ENCODE measurements at regions of chrX and their contacts with region 1.

Region 1: DNA sequence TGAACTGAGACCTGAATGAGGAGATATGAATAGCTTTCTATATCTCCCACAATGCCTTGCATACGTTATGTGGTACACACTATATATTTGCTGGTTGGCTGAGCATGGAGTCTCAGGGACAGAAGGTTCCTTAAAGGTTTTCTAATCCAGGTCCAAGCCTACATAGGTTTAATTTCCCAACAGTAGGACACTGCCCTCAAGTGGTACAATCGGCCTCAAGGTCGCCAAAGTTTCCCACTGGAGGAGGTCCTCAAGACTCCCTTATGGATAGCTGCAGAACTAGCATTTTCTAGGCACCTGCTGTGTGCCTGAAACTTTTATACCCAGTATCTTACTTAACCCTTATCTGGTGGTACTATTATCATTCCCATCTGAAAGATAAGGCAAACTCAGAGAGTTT is 21.0 kb upstream of the EFNB1 start:
- DNase-seq: no peak

Region 2: GRCh38 chrX:68511255-68511654 is 296.6 kb before region 1 on chrX:
- intact Hi-C with region 1: loop called in 1 of 2 experiments (anchors 10 kb)
- DNase-seq: no peak

Region 3: GRCh38 chrX:68732906-68733493 is 74.8 kb before region 1 on chrX:
- intact Hi-C with region 1: loop called in 1 of 2 experiments (anchors 5 kb)
- DNase-seq: peak; percentile 88

Region 4: GRCh38 chrX:68828740-68829552 is 21.1 kb after region 1 on chrX and contains the start of gene EFNB1:
- intact Hi-C with region 1: no loop called
- DNase-seq: peak; percentile 97
- total RNA-seq, gene EFNB1: 18.9 to 26.4 TPM